Mammary epithelial cell (primary cell): ENCODE measurements at regions of chr13 and their contacts with region 1.

Region 1: DNA sequence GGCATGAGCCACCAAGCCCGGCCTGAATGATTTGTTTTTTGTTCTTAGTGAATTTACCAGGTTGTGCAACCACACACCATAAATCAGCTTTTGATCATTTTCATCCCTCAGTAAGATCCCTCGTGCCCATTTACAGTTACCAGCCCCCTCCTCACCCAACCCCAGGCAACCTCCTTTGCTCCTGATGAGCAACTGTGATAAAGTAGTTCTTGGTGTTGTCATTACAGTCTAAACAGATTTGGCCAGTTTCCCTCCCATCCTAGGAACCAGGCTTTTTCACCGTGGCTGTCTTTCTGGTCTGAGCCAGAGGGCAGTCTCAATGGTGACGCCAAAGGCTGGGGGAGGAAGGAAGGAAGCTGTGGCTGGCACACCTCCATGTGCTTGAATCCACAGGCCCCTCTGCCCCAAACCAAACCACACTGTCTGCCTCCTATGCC is 61.2 kb upstream of the WDFY2 start:
- DNase-seq: peak; percentile 77
- H3K4me3 ChIP-seq: no peak overlapping the region
- H3K27ac ChIP-seq: peak overlapping the region; percentile 63
- H3K4me1 ChIP-seq: peaks cover 38% of the 10 kb centered on the region
- H3K27me3 ChIP-seq: no peaks in the 10 kb centered on the region
- CTCF ChIP-seq: no peak

Region 2: GRCh38 chr13:51221674-51222036 is 301.4 kb before region 1 on chr13:
- CTCF ChIA-PET with region 1: no interaction called
- dilution Hi-C with region 1: no loop called
- in situ Hi-C with region 1: no loop called
- intact Hi-C with region 1: no loop called
- DNase-seq: no peak
- H3K4me3 ChIP-seq: peak overlapping the region; percentile 40 to 82 (median 60)
- H3K27ac ChIP-seq: no peak overlapping the region
- H3K4me1 ChIP-seq: peaks cover 11% of the 10 kb centered on the region
- H3K27me3 ChIP-seq: peaks cover 19% of the 10 kb centered on the region
- CTCF ChIP-seq: no peak

Region 3: DNA sequence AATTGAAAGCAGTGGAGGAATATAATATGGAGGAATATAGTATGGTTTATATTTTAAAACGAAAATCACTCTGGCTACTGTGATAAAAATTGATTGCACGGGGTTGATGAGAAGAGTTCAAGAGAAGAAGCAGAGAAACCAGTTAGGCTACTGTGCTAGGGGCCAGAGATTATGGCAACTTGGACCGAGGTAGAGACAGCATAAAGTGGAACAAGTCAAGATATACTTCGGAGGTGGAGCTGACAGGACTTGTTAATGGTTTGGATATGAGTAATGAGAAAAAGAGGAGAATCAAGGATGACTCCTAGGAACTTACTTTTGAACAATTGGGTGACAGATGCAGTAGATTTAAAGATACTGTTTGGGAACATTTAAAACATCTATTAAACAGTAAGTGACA is 54.6 kb after region 1 on chr13:
- CTCF ChIA-PET with region 1: no interaction called
- dilution Hi-C with region 1: no loop called
- in situ Hi-C with region 1: no loop called
- intact Hi-C with region 1: loop called (anchors 2 kb)
- DNase-seq: peak; percentile 58
- H3K4me3 ChIP-seq: peak overlapping the region in 2 of 3 experiments; percentile 6 to 46
- H3K27ac ChIP-seq: peak overlapping the region; percentile 80
- H3K4me1 ChIP-seq: peaks cover 20% of the 10 kb centered on the region
- H3K27me3 ChIP-seq: no peaks in the 10 kb centered on the region
- CTCF ChIP-seq: no peak

Region 4: GRCh38 chr13:51601601-51602565 is 78.8 kb after region 1 on chr13:
- CTCF ChIA-PET with region 1: no interaction called
- dilution Hi-C with region 1: no loop called
- in situ Hi-C with region 1: no loop called
- intact Hi-C with region 1: no loop called
- DNase-seq: no peak
- H3K4me3 ChIP-seq: no peak overlapping the region
- H3K27ac ChIP-seq: no peak overlapping the region
- H3K4me1 ChIP-seq: peaks cover 11% of the 10 kb centered on the region
- H3K27me3 ChIP-seq: no peaks in the 10 kb centered on the region
- CTCF ChIP-seq: no peak